Activated CD4-positive, alpha-beta memory T cell treated with anti-CD3 and anti-CD28 coated beads for 36 hours (primary cell): ENCODE measurements at regions of chr9 and their contacts with region 1.

Region 1: DNA sequence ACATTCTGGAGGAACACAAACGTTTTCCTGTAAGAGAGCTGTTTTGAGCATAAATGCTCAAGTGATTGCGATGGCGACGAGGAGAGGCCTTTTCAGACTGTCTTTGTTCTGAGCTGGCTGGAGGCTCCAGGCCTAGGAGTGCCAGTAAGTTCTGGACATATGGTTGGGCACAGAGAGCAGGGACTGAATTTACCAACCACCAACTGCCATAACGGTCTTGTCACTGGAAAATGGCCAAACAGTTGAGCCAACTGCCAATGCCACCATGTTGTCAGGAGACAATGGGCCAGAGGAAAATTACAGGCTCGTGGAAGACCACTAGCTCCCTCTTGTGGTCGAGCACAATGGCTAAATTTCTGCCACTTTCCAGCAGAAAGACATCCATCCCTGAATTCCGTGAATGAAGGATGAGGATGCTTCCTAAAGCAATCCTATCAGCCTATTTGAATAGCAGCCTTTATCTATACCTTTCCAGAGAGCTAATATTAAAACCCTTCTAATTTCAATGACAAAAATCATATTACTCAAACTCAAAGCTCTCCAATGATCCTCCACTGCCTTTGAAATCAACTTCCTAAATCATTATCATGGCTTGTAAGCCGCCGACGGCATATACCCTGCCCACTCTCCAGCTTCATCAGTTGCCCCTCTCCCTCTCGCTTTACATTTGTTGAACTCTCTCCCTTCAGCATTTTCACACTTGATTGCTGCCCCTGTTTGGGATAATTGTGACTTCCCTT is 66.9 kb upstream of the GLIS3 start:
- DNase-seq: peak; percentile 45
- H3K4me3 Mint-ChIP-seq: no peak overlapping the region
- H3K27ac Mint-ChIP-seq: no peak overlapping the region
- H3K4me1 Mint-ChIP-seq: peaks cover 2% of the 10 kb centered on the region
- H3K27me3 Mint-ChIP-seq: peaks cover 6% of the 10 kb centered on the region

Region 2: GRCh38 chr9:4327504-4328191 is 39.1 kb before region 1 on chr9:
- CTCF ChIA-PET with region 1: interaction called, 11 read pairs
- POLR2A ChIA-PET with region 1: no interaction called
- intact Hi-C with region 1: no loop called
- DNase-seq: no peak
- H3K4me3 Mint-ChIP-seq: no peak overlapping the region
- H3K27ac Mint-ChIP-seq: no peak overlapping the region
- H3K4me1 Mint-ChIP-seq: peaks cover 8% of the 10 kb centered on the region
- H3K27me3 Mint-ChIP-seq: peaks cover 9% of the 10 kb centered on the region

Region 3: DNA sequence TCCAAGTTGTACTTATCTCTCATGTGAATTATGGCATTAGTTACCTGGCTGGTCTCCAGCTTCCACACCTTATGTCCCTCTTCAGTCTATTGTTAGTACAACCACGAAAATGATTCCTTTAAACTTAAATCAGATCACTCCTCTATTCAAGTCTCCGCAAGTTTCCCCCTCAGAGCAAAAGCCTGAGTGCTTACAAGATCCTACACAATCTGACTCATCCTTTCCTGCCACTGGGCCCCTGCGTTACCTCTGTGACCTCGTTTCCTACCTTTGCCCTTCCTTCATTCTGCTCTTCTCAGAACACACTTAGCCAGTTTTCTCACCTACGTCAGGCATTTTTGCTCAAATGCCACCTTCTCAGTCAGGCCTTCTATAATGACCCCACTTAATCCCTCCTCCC is 21.8 kb before region 1 on chr9:
- CTCF ChIA-PET with region 1: interaction called, 28 read pairs
- POLR2A ChIA-PET with region 1: no interaction called
- intact Hi-C with region 1: loop called (anchors 1 kb)
- DNase-seq: peak; percentile 79
- H3K4me3 Mint-ChIP-seq: no peak overlapping the region
- H3K27ac Mint-ChIP-seq: no peak overlapping the region
- H3K4me1 Mint-ChIP-seq: peaks cover 13% of the 10 kb centered on the region
- H3K27me3 Mint-ChIP-seq: no peaks in the 10 kb centered on the region

Region 4: DNA sequence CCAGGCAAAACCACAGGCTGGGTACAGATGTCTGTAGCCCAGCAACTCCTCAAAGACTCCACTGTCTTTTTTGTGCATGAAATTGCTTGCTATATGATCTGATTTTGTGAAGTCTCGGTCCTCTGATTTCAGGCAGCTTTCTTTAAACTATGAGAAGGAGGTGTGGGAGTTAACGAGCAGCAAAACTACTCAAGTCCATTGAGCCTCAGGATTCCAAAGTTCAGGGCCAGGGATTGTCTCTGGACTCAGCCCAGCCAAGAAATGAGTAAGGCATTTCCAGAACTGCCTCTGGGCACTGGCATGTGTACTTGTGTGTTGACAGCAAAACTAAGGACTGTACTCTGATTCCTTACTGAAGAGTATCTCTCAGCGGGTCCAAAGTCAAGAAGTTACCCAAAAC is 13.5 kb before region 1 on chr9:
- CTCF ChIA-PET with region 1: interaction called, 11 read pairs
- POLR2A ChIA-PET with region 1: no interaction called
- intact Hi-C with region 1: no loop called
- DNase-seq: no peak
- H3K4me3 Mint-ChIP-seq: no peak overlapping the region
- H3K27ac Mint-ChIP-seq: no peak overlapping the region
- H3K4me1 Mint-ChIP-seq: no peaks in the 10 kb centered on the region
- H3K27me3 Mint-ChIP-seq: peaks cover 2% of the 10 kb centered on the region